Naive thymus-derived CD4-positive, alpha-beta T cell (primary cell): ENCODE measurements at regions of chr1 and their contacts with region 1.

Region 1: DNA sequence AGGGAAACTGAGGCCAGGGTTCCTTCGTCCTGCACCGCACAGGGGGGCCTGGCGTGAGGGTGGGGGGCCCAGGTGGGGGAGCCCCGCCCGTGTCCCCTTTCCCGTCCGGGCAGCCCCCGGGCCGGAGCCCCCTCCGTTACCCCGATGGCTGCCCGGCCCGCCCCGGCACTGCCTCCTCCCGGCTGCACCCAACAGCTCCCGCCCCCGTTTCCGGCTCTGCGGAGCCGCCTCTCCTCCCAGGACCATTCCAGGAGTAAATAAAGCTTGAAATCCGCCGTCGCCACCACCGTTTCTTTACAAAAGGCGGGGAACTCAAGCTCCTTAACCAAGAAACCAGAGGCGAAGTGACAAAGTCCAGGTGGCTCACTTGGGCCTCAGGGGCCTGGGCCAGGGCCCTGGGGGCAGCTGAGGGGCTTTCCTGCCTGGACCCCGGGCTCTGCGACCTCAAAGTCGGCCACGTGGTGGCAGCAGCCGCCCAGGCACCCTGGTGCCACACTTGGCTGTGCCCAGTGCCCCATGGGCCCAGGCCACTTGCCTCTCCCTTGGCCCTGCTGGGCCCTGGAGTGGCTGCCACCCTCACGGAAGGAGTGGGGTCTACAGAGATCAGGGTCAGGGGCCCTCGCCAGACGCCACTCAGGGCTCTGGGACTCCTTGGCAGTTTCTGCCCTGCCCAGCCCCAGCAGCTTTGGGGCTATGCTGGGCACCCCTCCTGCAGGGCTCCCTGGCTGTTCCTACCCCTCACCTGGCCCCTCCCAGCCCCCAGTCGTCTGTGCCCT is 514 bp upstream of the FAAP20 start:
- DNase-seq: peak; percentile 85 to 98 (median 95)
- ATAC-seq: peak; percentile 85
- H3K4me3 ChIP-seq: peak overlapping the region; percentile 89
- H3K4me3 Mint-ChIP-seq: peak overlapping the region; percentile 71 to 91 (median 86)
- H3K27ac ChIP-seq: peak overlapping the region; percentile 88
- H3K27ac Mint-ChIP-seq: peak overlapping the region; percentile 52 to 94 (median 92)
- H3K4me1 ChIP-seq: peaks cover 22 to 33% of the 10 kb centered on the region in 2 donors
- H3K4me1 Mint-ChIP-seq: peaks cover 15 to 34% (median 26%) of the 10 kb centered on the region in 7 donors
- H3K27me3 ChIP-seq: no peaks in the 10 kb centered on the region
- H3K27me3 Mint-ChIP-seq: no peaks in the 10 kb centered on the region

Region 2: DNA sequence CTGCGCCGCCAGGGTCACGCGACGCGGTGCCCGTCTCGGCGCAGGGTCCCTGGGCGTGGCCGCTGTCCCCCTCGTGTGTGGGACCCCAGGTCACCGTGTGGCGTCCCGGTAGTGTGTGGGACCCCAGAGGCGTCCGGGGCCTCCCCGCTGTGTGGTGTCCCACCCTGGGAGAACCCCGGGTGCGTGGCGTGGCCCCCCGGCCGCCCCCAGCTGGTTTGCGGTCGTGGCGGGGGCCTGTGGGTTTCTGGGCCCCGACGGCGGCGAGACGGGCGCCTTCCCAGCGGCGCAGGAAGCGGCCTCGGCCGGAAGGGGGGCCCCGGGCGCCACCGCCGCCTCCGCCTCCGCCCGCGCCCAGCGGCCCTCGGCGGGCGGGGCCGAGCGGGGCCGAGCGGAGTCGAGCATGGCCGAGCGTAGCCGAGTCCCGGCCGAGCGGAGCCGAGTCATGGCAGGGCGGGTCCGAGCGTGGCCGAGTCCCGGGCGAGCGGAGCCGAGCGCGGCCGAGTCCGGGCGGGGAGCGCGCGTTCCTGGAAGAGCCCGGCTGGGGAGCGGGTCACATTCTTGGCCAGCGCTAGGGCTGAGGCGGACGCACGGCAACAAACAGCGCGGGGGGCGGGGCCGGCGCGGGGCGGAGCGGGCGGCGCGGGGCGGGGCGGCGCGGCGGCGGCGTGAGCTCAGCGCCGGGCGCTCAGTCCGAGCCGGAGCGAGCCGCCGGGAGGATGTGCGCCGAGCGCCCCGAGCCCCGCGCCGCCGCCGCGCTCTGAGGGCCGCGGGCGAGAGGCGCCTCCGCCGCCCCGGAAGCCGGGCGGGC is 32.5 kb after region 1 on chr1:
- CTCF ChIA-PET with region 1: interaction called, 5 read pairs
- POLR2A ChIA-PET with region 1: interaction called, 47 read pairs
- intact Hi-C with region 1: loop called in 1 of 2 experiments (anchors 1 kb)
- DNase-seq: peak; percentile 87 to 98 (median 97)
- ATAC-seq: peak; percentile 88
- H3K4me3 ChIP-seq: peak overlapping the region; percentile 33
- H3K4me3 Mint-ChIP-seq: peak overlapping the region in 9 of 10 donors; percentile 56 to 83 (median 69)
- H3K27ac ChIP-seq: peak overlapping the region; percentile 72
- H3K27ac Mint-ChIP-seq: peak overlapping the region in 4 of 9 donors; percentile 26 to 80 (median 62)
- H3K4me1 ChIP-seq: peaks cover 5 to 14% of the 10 kb centered on the region in 2 donors
- H3K4me1 Mint-ChIP-seq: peaks cover 9 to 24% (median 17%) of the 10 kb centered on the region in 7 donors
- H3K27me3 ChIP-seq: no peaks in the 10 kb centered on the region
- H3K27me3 Mint-ChIP-seq: peaks cover 0 to 8% (median 0%) of the 10 kb centered on the region in 5 donors

Region 3: DNA sequence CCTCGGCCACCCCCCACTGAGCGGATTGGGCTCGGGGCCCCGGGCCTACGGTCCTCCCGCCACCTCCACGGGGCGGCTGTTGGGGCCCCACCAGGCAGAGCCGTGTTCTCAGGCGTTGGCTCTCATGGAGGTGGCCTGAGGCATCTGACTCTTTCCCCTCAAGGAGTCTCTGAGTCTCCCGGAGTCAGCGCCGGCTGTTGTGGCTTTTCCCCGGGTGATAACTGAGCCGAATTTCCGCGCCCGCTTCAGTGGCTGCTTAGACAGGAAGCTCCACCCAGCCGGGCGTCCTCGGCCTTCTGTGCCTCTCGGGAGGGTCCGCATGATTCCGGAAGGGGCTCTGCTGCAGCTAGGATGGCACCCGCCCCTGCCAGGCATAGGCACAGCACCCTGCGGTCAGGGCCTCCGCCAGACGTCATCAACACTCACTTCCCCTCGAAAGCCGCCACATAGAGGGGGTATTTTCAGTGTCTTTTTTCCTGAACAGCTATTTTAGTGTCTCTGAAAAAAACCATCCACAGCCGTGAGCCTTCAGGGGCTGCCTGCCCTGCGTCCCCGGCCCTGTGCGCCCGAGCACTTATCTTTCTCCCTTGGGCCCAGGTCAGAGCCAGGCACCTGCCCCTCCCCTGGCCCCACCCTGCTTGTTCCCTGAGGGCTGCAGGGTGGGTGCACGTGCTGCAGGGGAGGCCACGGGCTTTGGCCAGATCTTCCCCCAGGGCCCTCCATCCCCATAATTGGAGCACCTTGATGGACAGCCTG is 105.9 kb after region 1 on chr1:
- CTCF ChIA-PET with region 1: interaction called, 6 read pairs
- POLR2A ChIA-PET with region 1: interaction called, 5 read pairs
- intact Hi-C with region 1: loop called in 1 of 2 experiments (anchors 1 kb)
- DNase-seq: peak; percentile 69 to 98 (median 97)
- ATAC-seq: peak; percentile 90
- H3K4me3 ChIP-seq: peak overlapping the region; percentile 77
- H3K4me3 Mint-ChIP-seq: peak overlapping the region; percentile 79 to 89 (median 85)
- H3K27ac ChIP-seq: peak overlapping the region; percentile 98
- H3K27ac Mint-ChIP-seq: peak overlapping the region; percentile 91 to 99 (median 99)
- H3K4me1 ChIP-seq: peaks cover 36 to 54% of the 10 kb centered on the region in 2 donors
- H3K4me1 Mint-ChIP-seq: peaks cover 14 to 72% (median 42%) of the 10 kb centered on the region in 7 donors
- H3K27me3 ChIP-seq: no peaks in the 10 kb centered on the region
- H3K27me3 Mint-ChIP-seq: no peaks in the 10 kb centered on the region

Region 4: GRCh38 chr1:2391041-2391930 is 196.2 kb after region 1 on chr1 and contains the starts of genes MORN1 and RER1:
- CTCF ChIA-PET with region 1: interaction called, 8 read pairs
- POLR2A ChIA-PET with region 1: interaction called, 14 read pairs
- intact Hi-C with region 1: loop called (anchors 1 to 2 kb)
- DNase-seq: peak; percentile 96 to 100 (median 99)
- ATAC-seq: peak; percentile 98
- H3K4me3 ChIP-seq: peak within 1 kb of the TSS; percentile 77
- H3K4me3 Mint-ChIP-seq: peak within 1 kb of the TSS; percentile 80 to 93 (median 90)
- H3K27ac ChIP-seq: peak within 1 kb of the TSS; percentile 82
- H3K27ac Mint-ChIP-seq: peak within 1 kb of the TSS; percentile 63 to 96 (median 88)
- H3K4me1 ChIP-seq: peaks cover 23 to 33% of the 10 kb centered on the region in 2 donors
- H3K4me1 Mint-ChIP-seq: peaks cover 23 to 41% (median 31%) of the 10 kb centered on the region in 7 donors
- H3K27me3 ChIP-seq: no peaks in the 10 kb centered on the region
- H3K27me3 Mint-ChIP-seq: no peaks in the 10 kb centered on the region
- total RNA-seq, gene MORN1: 8.5 to 16.4 (median 11.2) TPM
- total RNA-seq, gene RER1: 71.0 to 150 (median 136) TPM

Region 5: GRCh38 chr1:2545759-2546514 is 350.9 kb after region 1 on chr1:
- CTCF ChIA-PET with region 1: interaction called, 14 read pairs
- POLR2A ChIA-PET with region 1: interaction called, 17 read pairs
- intact Hi-C with region 1: loop called (anchors 1 kb)
- DNase-seq: peak; percentile 83 to 91 (median 86)
- ATAC-seq: peak; percentile 74
- H3K4me3 ChIP-seq: peak overlapping the region; percentile 88
- H3K4me3 Mint-ChIP-seq: peak overlapping the region; percentile 27 to 97 (median 94)
- H3K27ac ChIP-seq: peak overlapping the region; percentile 97
- H3K27ac Mint-ChIP-seq: peak overlapping the region in 8 of 9 donors; percentile 28 to 98 (median 97)
- H3K4me1 ChIP-seq: peaks cover 18 to 40% of the 10 kb centered on the region in 2 donors
- H3K4me1 Mint-ChIP-seq: peaks cover 0 to 41% (median 18%) of the 10 kb centered on the region in 7 donors
- H3K27me3 ChIP-seq: no peaks in the 10 kb centered on the region
- H3K27me3 Mint-ChIP-seq: peaks cover 0 to 16% (median 0%) of the 10 kb centered on the region in 5 donors

Region 6: DNA sequence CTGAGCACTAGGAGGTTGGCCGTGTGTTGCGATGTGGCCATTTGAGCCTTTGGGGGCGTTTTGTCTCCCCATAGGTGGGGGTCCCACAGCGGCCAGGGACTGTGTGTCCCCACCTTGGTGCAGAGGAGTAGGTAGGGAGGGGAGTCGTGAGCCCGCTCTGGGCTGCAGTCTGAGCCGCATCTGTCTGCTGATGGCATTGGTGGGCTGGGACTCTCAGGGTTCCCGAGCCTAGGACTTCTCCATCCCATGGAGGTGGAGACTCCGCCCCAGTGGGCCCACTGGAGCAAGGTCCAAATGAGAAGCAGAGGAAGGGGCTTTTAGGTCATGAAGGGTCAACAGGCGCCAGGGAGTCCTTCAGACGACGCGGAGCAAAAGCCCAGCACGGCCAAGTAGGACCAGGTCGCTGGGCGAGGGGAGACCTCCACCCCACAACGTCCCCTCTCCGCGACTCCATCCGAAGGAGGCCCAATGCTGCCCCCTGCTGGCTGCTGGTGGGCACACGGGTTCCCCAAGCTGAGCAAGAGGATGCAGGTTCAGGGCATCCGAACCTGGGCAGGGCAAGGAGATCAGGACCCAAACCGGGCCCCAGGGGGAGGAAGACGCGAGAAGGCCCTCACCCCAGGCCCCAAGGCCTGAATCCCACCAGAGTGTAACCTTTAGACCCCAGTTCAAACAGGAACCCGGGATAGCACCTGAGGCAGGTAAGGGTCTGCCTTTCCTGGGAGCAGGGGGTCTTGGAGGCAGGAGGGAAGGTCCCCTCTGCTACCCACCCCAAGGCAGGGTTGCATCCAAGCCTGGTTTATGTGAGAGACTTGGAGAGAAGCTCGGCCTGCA is 591.5 kb after region 1 on chr1:
- CTCF ChIA-PET with region 1: interaction called, 3 read pairs
- POLR2A ChIA-PET with region 1: no interaction called
- intact Hi-C with region 1: loop called in 1 of 2 experiments (anchors 5 kb)
- DNase-seq: peak; percentile 42 to 78 (median 63)
- ATAC-seq: peak; percentile 75
- H3K4me3 ChIP-seq: no peak overlapping the region
- H3K4me3 Mint-ChIP-seq: no peak overlapping the region
- H3K27ac ChIP-seq: no peak overlapping the region
- H3K27ac Mint-ChIP-seq: no peak overlapping the region
- H3K4me1 ChIP-seq: peaks cover 0 to 6% of the 10 kb centered on the region in 2 donors
- H3K4me1 Mint-ChIP-seq: peaks cover 4 to 15% (median 11%) of the 10 kb centered on the region in 7 donors
- H3K27me3 ChIP-seq: peaks cover 0 to 9% of the 10 kb centered on the region in 2 donors
- H3K27me3 Mint-ChIP-seq: peaks cover 23 to 37% (median 30%) of the 10 kb centered on the region in 5 donors